ENCODE measurements at regions of chr3 and their contacts with region 1.

Region 1: GRCh38 chr3:79081335-79081734 is 686.5 kb downstream of the ROBO1 start:
- DNase-seq: no peak
- ATAC-seq: peak; percentile 72
- H3K4me3 ChIP-seq: no peak overlapping the region
- H3K27ac ChIP-seq: no peak overlapping the region
- H3K4me1 ChIP-seq: no peaks in the 10 kb centered on the region
- H3K27me3 ChIP-seq: no peaks in the 10 kb centered on the region
- CTCF ChIP-seq: no peak
- EP300 ChIP-seq: no peak
- POLR2A ChIP-seq: no peak
- RAD21 ChIP-seq: no peak

Region 2: GRCh38 chr3:79367066-79367465 is 285.7 kb after region 1 on chr3:
- CTCF ChIA-PET with region 1: interaction called, 222 read pairs
- POLR2A ChIA-PET with region 1: no interaction called
- RAD21 ChIA-PET with region 1: interaction called, 124 read pairs
- SMC1A ChIA-PET with region 1: interaction called, 88 read pairs
- in situ Hi-C with region 1: no loop called
- intact Hi-C with region 1: loop called (anchors 2 kb)
- DNase-seq: no peak
- ATAC-seq: no peak
- H3K4me3 ChIP-seq: no peak overlapping the region
- H3K27ac ChIP-seq: no peak overlapping the region
- H3K4me1 ChIP-seq: no peaks in the 10 kb centered on the region
- H3K27me3 ChIP-seq: no peaks in the 10 kb centered on the region
- CTCF ChIP-seq: no peak
- EP300 ChIP-seq: no peak
- POLR2A ChIP-seq: no peak
- RAD21 ChIP-seq: no peak